Tibial artery (tissue), 4 donors: ENCODE measurements at regions of chr9 and their contacts with region 1.

Region 1: GRCh38 chr9:37471942-37472679 is 6.9 kb upstream of the ZBTB5 start:
- DNase-seq: no peak
- H3K4me3 ChIP-seq: peak overlapping the region; percentile 40 to 45
- H3K27ac ChIP-seq: peak overlapping the region; percentile 72 to 81
- H3K4me1 ChIP-seq: peaks cover 0 to 17% (median 3%) of the 10 kb centered on the region in 4 donors
- H3K27me3 ChIP-seq: no peaks in the 10 kb centered on the region
- CTCF ChIP-seq: no peak

Region 2: DNA sequence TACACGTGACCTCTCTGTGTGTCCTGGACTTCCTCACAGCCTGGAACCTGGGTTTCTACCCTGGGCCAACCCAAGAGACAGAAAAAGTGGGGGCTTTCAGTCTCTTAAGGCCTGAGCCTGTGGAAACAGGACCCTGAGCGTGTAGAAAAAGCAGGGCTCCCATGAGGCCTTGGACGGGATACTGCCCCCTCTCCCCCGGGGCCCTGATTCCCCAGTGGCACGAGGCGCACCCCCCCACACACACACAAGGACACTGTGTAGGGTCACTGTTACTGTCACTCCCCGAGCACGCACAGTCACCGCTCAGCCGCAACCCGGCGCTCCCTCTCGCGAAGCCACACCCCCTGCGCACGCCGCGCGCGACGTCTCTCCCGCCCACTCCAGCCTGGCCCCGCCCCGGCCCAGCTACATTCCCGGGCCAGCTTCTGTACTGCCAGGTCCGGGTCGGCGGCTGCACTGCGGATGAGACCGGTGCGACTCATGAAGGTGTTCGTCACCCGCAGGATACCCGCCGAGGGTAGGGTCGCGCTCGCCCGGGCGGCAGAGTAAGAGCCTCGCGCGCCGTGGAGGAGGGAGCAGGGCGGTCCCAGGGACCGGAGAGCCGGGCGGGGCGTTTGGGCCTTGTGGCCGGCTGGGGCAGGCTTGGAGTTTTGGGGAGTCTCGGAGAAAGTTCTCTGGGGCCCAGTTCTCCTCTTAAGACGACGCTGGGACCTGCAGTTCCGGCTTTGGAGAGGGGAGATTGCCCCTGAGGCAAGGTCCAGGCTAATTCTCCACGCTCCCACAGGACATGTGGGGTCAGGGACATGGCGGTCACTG is 49.6 kb before region 1 on chr9 and contains the start of gene GRHPR:
- intact Hi-C with region 1: loop called (anchors 5 kb)
- DNase-seq: peak; percentile 84 to 92
- H3K4me3 ChIP-seq: peak within 1 kb of the TSS; percentile 66 to 94
- H3K27ac ChIP-seq: peak within 1 kb of the TSS; percentile 75 to 86
- H3K4me1 ChIP-seq: peaks cover 0 to 27% (median 25%) of the 10 kb centered on the region in 4 donors
- H3K27me3 ChIP-seq: no peaks in the 10 kb centered on the region
- CTCF ChIP-seq: no peak

Region 3: GRCh38 chr9:37592108-37592951 is 120.2 kb after region 1 on chr9 and contains the start of gene TOMM5:
- intact Hi-C with region 1: loop called (anchors 10 kb)
- DNase-seq: peak; percentile 93 to 95
- H3K4me3 ChIP-seq: peak within 1 kb of the TSS; percentile 82 to 86
- H3K27ac ChIP-seq: peak within 1 kb of the TSS; percentile 80 to 81
- H3K4me1 ChIP-seq: peaks cover 0 to 25% (median 16%) of the 10 kb centered on the region in 4 donors
- H3K27me3 ChIP-seq: no peaks in the 10 kb centered on the region
- CTCF ChIP-seq: no peak